K562 (cell line): ENCODE measurements at regions of chr3 and their contacts with region 1.

Region 1: GRCh38 chr3:133661454-133662277 is at the start of gene TOPBP1:
- DNase-seq: peak; percentile 63 to 90 (median 72)
- ATAC-seq: peak; percentile 89
- H3K4me3 ChIP-seq: peak within 1 kb of the TSS; percentile 99
- H3K27ac ChIP-seq: peak within 1 kb of the TSS; percentile 97
- H3K4me1 ChIP-seq: peaks cover 0 to 15% of the 10 kb centered on the region in 2 experiments; a peak in 2 of 5 replicates
- H3K27me3 ChIP-seq: no peaks in the 10 kb centered on the region
- CTCF ChIP-seq: no peak
- EP300 ChIP-seq: no peak; the same call in 1 of the 2 replicates
- POLR2A ChIP-seq: peak; percentile 78
- RAD21 ChIP-seq: no peak
- polyA plus RNA-seq, gene TOPBP1: 16.6 to 20.1 TPM

Region 2: DNA sequence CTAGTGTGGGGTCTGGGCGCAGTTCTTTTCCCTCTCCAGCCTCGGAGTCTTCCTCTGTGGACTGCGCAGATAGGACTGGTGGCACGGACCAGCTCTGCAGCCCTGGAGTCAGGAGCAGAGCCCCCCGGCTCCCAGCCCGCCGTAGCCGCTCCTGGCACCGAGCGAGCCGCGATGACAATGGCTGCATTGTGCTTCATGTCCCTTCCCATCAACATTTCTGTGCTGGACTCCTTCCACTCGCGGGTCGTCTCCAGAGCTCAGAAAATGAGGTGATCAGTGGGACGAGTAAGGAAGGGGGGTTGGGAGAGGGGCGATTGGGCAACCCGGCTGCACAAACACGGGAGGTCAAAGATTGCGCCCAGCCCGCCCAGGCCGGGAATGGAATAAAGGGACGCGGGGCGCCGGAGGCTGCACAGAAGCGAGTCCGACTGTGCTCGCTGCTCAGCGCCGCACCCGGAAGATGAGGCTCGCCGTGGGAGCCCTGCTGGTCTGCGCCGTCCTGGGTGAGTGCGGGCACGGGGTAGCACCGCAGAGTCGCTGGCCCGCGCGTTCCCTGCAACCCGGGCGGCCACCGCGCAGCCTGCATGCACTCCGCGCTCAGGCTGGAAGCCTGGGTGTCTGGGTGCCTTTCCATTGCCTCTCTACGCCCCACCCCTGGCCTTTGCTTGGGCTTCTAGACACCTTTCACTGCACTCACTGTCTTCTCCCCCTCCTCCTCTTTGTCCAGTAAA is 84.5 kb after region 1 on chr3 and contains the start of gene TF:
- CTCF ChIA-PET with region 1: no interaction called
- POLR2A ChIA-PET with region 1: no interaction called
- in situ Hi-C with region 1: no loop called
- intact Hi-C with region 1: loop called (anchors 5 kb)
- DNase-seq: no peak
- ATAC-seq: no peak
- H3K4me3 ChIP-seq: no peak within 1 kb of the TSS
- H3K27ac ChIP-seq: no peak within 1 kb of the TSS
- H3K4me1 ChIP-seq: peaks cover 14 to 19% of the 10 kb centered on the region in 2 experiments; a peak in 4 of 5 replicates
- H3K27me3 ChIP-seq: peaks cover 0 to 12% of the 10 kb centered on the region in 2 experiments; a peak in 2 of 5 replicates
- CTCF ChIP-seq: no peak
- EP300 ChIP-seq: no peak
- POLR2A ChIP-seq: no peak
- RAD21 ChIP-seq: no peak
- polyA plus RNA-seq, gene TF: 3.1 to 6.7 TPM

Region 3: GRCh38 chr3:133776794-133777438 is 115.2 kb after region 1 on chr3:
- CTCF ChIA-PET with region 1: interaction called, 3 read pairs
- POLR2A ChIA-PET with region 1: no interaction called
- in situ Hi-C with region 1: no loop called
- intact Hi-C with region 1: loop called (anchors 1 kb)
- DNase-seq: peak in 2 of 4 experiments; percentile 14 to 18
- ATAC-seq: peak; percentile 88
- H3K4me3 ChIP-seq: no peak overlapping the region
- H3K27ac ChIP-seq: no peak overlapping the region
- H3K4me1 ChIP-seq: peaks cover 0 to 4% of the 10 kb centered on the region in 2 experiments; a peak in 3 of 5 replicates
- H3K27me3 ChIP-seq: peaks cover 0 to 13% of the 10 kb centered on the region in 2 experiments; a peak in 2 of 5 replicates
- CTCF ChIP-seq: peak in 2 of 3 experiments; percentile 18 to 52; a peak in 4 of 6 replicates
- EP300 ChIP-seq: no peak
- POLR2A ChIP-seq: no peak
- RAD21 ChIP-seq: peak in 1 of 2 experiments; percentile 57; a peak in 2 of 4 replicates

Region 4: DNA sequence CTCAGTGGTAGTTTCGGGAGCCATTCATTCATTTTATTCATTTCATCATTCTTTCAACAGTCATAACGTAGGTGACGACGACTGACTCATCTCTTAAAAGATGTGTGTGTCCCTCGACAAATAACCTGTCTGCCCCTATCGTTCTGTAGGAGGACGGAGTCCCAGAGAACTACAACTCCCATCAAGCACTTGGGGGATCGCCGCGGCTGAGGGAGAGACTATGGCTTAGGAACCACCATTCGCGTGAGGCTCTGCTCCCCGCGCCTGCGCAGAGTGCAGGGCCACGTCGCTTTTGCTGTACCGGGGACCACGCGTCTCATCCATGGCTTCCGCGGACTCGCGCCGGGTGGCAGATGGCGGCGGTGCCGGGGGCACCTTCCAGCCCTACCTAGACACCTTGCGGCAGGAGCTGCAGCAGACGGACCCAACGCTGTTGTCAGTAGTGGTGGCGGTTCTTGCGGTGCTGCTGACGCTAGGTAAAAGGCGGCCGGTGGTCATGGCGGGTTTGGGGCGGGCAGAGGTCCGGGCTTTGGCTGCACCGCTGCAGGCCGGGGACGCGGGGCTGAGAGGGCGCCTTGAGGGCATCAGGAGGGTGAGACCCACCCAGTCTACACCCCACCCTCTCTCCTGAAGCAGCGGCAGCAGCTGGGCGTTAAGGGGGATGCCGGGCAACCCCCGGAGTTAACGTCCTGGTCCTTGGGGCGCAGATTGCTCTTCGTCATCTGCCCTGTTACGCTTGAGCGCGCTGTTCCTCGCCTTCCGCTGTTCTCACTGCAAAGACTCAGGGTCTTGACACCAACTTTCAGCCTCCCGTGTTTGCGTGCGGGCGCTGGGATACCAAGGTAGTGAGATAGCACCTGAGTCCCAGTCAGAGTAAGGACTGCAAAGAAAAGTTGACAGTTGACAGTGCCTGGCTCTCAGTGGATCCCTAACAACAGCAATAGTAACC is 144.1 kb after region 1 on chr3 and contains the start of gene SRPRB:
- CTCF ChIA-PET with region 1: no interaction called
- POLR2A ChIA-PET with region 1: interaction called, 4 read pairs
- in situ Hi-C with region 1: no loop called
- intact Hi-C with region 1: loop called (anchors 2 kb)
- DNase-seq: peak; percentile 90 to 94 (median 92)
- ATAC-seq: peak; percentile 99
- H3K4me3 ChIP-seq: peak within 1 kb of the TSS; percentile 89
- H3K27ac ChIP-seq: peak within 1 kb of the TSS; percentile 80
- H3K4me1 ChIP-seq: no peaks in the 10 kb centered on the region; a peak in 1 of 5 replicates
- H3K27me3 ChIP-seq: no peaks in the 10 kb centered on the region
- CTCF ChIP-seq: no peak
- EP300 ChIP-seq: no peak
- POLR2A ChIP-seq: peak; percentile 92
- RAD21 ChIP-seq: no peak
- polyA plus RNA-seq, gene SRPRB: 29.5 to 37.5 TPM

Region 5: GRCh38 chr3:133901083-133901482 is 239.4 kb after region 1 on chr3:
- CTCF ChIA-PET with region 1: no interaction called
- POLR2A ChIA-PET with region 1: no interaction called
- in situ Hi-C with region 1: loop called (anchors 25 kb)
- intact Hi-C with region 1: loop called (anchors 5 kb)
- DNase-seq: peak in 2 of 4 experiments; percentile 29 to 36
- ATAC-seq: peak; percentile 90
- H3K4me3 ChIP-seq: no peak overlapping the region
- H3K27ac ChIP-seq: no peak overlapping the region
- H3K4me1 ChIP-seq: peaks cover 3 to 4% of the 10 kb centered on the region in 2 experiments; a peak in 3 of 5 replicates
- H3K27me3 ChIP-seq: 0 out of 5 replicates have a peak, but pooled peaks cover 0 to 6% of the 10 kb centered on the region in 2 experiments
- CTCF ChIP-seq: peak; percentile 68 to 85 (median 85)
- EP300 ChIP-seq: no peak
- POLR2A ChIP-seq: no peak
- RAD21 ChIP-seq: peak; percentile 64 to 80

Region 6: GRCh38 chr3:133910422-133910821 is 248.8 kb after region 1 on chr3:
- CTCF ChIA-PET with region 1: no interaction called
- POLR2A ChIA-PET with region 1: no interaction called
- in situ Hi-C with region 1: loop called (anchors 25 kb)
- intact Hi-C with region 1: no loop called
- DNase-seq: peak in 2 of 4 experiments; percentile 26 to 29
- ATAC-seq: no peak
- H3K4me3 ChIP-seq: no peak overlapping the region
- H3K27ac ChIP-seq: no peak overlapping the region
- H3K4me1 ChIP-seq: no peaks in the 10 kb centered on the region; a peak in 1 of 5 replicates
- H3K27me3 ChIP-seq: no peaks in the 10 kb centered on the region
- CTCF ChIP-seq: peak in 1 of 3 experiments; percentile 23; a peak in 1 of 6 replicates
- EP300 ChIP-seq: no peak
- POLR2A ChIP-seq: no peak
- RAD21 ChIP-seq: no peak

Region 7: GRCh38 chr3:134630506-134630905 is 968.8 kb after region 1 on chr3:
- CTCF ChIA-PET with region 1: no interaction called
- POLR2A ChIA-PET with region 1: no interaction called
- in situ Hi-C with region 1: no loop called
- intact Hi-C with region 1: no loop called
- DNase-seq: peak in 1 of 4 experiments; percentile 14
- ATAC-seq: peak; percentile 73
- H3K4me3 ChIP-seq: no peak overlapping the region
- H3K27ac ChIP-seq: no peak overlapping the region
- H3K4me1 ChIP-seq: no peaks in the 10 kb centered on the region
- H3K27me3 ChIP-seq: no peaks in the 10 kb centered on the region
- CTCF ChIP-seq: peak; percentile 20 to 35 (median 20); a peak in 2 of 6 replicates
- EP300 ChIP-seq: no peak
- POLR2A ChIP-seq: no peak
- RAD21 ChIP-seq: 0 out of 4 replicates have a peak, but pooled peaks of 1 of the 2 experiments have one; percentile 8